GM13976 (cell line): ENCODE measurements at regions of chr1 and their contacts with region 1.

Region 1: GRCh38 chr1:204591594-204592051 is 75.4 kb downstream of the MDM4 start:
- DNase-seq: no peak
- CTCF ChIP-seq: no peak

Region 2: DNA sequence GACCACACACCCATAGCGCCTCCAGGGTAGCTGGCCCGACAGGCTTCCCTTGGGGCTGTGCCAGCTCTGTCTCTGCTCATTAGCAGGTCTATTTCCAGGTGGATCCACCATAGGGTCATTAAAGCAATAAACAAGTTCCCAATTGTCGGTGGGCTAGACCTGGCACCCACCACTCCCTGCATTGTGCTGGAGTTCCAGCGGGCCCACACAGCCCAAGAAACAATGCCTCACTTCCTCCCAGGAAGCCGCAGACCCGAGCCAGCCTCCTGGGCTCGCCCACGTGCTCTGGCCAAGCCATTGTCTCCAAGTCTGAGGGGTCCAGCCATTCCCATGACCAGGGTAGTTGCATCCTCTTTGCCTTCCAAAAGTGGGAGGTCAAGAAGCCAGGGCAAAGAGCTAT is 546.2 kb before region 1 on chr1:
- in situ Hi-C with region 1: no loop called
- DNase-seq: no peak
- CTCF ChIP-seq: no peak

Region 3: DNA sequence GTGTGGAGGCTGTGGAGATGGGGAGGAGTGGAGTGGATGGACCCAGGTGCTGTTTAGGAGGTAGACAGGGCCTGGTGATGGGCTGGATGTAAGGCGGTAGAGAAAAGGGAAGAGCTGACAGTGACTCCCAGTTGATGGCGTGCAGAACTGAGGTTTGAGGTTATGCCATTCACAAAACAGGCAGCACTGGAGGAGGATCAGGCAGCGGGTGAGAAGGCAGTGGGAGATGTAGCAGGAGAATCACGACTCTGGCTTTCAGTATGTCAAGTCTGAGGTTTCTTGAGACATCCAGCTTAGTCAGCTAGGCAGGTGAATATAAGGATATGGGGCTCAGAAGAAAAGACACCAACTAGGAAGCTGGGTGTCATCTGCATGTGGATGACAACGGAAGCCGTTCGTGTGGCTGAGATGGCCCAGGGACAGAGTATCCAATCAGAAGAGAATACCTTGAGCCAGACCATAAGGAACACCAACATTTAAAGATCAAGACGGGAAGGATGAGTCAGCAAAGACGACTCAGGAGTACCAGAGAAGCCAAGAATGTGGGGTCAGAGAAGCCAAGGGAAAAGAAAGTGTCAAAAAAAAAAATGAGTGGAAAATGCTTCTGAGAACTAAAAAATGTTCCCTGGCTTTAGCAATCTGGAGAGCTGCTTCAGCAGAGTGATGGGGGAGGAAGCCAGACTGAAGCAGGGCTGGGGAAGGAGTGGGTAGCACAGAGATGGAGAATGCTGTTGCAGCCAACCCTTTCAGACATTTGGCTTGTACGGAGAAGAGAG is 78.7 kb after region 1 on chr1:
- in situ Hi-C with region 1: loop called (anchors 10 kb)
- DNase-seq: no peak
- CTCF ChIP-seq: no peak